ENCODE measurements at regions of chrX and their contacts with region 1.

Region 1: DNA sequence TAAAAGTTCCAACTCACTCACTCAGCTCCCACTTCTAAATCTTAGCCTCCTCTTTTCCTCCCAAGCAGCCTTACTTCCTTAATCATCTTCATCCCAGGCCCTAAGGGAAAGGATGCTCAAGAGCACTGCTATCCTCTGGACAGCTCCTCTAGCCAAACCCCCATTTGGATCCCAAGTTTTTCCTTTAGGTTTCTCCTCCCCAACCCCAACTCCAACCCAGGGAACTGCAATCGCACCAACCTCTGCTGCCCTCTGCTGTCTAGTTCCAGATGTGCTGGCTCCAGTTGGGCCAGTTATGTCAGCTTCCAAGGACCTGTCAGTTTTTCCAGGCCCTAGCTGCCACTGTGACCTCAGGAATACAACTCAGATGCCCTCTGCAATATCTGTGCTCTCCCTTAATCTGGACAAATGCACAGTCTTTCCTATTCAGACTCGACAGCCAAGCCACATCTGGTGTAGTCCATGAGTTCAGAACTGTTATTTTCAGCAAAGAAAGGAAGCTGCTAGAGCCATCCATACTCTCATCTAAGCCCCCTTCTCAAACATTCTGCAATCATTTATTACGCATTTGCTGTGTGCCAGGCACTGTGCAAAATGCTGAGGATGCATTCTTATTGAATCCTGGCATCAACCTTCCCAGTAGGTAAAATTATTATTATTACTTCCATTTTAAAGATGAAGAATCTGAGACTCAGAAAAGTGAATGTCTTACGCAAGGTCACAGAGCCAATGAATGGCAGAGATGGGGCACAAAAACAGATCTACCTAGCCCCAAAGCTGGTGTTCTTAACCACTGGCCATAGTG is 12.3 kb upstream of the XPNPEP2 start:
- DNase-seq: peak; percentile 59
- ATAC-seq: peak; percentile 53
- H3K4me3 Mint-ChIP-seq: no peak overlapping the region
- H3K27ac Mint-ChIP-seq: peak overlapping the region; percentile 62
- H3K4me1 Mint-ChIP-seq: peaks cover 33% of the 10 kb centered on the region
- H3K27me3 Mint-ChIP-seq: no peaks in the 10 kb centered on the region

Region 2: DNA sequence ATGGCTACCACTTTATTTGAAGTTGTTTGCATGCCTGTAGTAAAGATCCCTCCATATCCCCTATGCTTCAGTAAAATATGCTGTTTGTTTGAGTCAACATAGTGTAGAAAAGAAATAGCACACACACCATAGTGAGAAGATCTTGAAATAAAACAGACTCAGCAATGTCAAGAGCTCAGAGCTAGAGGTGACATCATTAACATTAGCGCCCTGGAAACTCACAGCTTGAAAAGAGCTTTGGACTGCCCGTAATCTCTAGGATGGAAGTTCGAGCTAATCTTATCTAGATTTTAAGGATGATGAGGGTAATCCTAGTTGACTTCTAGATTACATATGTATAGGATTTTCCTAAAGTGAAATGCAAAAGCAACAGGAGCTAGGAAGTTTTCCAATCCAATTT is 478.9 kb before region 1 on chrX:
- CTCF ChIA-PET with region 1: no interaction called
- POLR2A ChIA-PET with region 1: no interaction called
- intact Hi-C with region 1: no loop called
- DNase-seq: no peak
- ATAC-seq: no peak
- H3K4me3 Mint-ChIP-seq: no peak overlapping the region
- H3K27ac Mint-ChIP-seq: no peak overlapping the region
- H3K4me1 Mint-ChIP-seq: no peaks in the 10 kb centered on the region
- H3K27me3 Mint-ChIP-seq: no peaks in the 10 kb centered on the region

Region 3: DNA sequence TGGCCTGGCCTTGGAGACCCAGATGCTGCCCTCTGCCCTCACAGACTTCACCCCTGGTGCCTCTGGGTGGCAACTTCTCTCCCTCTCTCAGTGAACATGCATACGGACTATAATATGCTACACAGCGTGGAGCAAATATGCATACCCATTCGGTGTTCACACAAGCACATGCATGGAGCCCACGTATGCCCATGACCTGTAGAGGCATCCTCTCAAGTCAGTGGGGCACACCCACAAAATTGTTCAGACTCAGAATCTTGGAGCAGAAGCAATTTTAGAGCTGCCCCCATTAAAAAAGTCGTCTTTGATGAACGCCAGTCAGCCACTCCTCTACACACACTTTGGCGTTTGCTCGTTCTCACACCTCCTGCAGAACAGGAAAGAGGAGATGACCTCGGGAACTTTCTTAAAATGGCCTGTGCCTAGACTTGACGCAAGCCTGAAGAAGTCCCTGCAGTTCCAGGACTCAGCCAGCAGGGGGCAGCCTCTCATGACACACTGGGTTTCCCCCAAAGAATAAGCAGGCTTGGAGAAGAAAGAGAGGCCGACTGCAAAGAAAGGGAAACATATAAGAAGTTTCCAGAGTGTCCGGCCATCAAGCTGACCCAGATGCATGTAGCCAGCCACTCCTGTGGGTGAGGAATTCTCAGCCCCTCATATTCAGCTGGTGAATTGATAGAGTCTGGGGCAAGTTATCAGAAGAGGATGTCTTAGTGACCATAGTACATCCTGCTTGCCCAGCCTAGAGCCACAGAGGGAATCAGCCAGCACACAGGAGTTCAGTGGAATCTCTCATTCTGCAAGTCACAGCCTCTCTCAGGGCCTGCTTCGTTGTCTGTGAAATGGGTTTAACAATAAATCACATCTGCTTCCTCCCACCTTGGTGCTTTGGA is 89.0 kb before region 1 on chrX:
- CTCF ChIA-PET with region 1: interaction called, 13 read pairs
- POLR2A ChIA-PET with region 1: no interaction called
- intact Hi-C with region 1: loop called (anchors 1 kb)
- DNase-seq: peak; percentile 85
- ATAC-seq: peak; percentile 76
- H3K4me3 Mint-ChIP-seq: no peak overlapping the region
- H3K27ac Mint-ChIP-seq: no peak overlapping the region
- H3K4me1 Mint-ChIP-seq: no peaks in the 10 kb centered on the region
- H3K27me3 Mint-ChIP-seq: no peaks in the 10 kb centered on the region

Region 4: GRCh38 chrX:129654419-129655165 is 71.9 kb before region 1 on chrX and contains the start of gene APLN:
- CTCF ChIA-PET with region 1: interaction called, 12 read pairs
- POLR2A ChIA-PET with region 1: no interaction called
- intact Hi-C with region 1: loop called in 1 of 2 experiments (anchors 5 kb)
- DNase-seq: peak; percentile 38
- ATAC-seq: peak; percentile 70
- H3K4me3 Mint-ChIP-seq: peak within 1 kb of the TSS; percentile 63
- H3K27ac Mint-ChIP-seq: no peak within 1 kb of the TSS
- H3K4me1 Mint-ChIP-seq: peaks cover 9% of the 10 kb centered on the region
- H3K27me3 Mint-ChIP-seq: peaks cover 10% of the 10 kb centered on the region
- total RNA-seq, gene APLN: 1.9 to 2.1 TPM

Region 5: DNA sequence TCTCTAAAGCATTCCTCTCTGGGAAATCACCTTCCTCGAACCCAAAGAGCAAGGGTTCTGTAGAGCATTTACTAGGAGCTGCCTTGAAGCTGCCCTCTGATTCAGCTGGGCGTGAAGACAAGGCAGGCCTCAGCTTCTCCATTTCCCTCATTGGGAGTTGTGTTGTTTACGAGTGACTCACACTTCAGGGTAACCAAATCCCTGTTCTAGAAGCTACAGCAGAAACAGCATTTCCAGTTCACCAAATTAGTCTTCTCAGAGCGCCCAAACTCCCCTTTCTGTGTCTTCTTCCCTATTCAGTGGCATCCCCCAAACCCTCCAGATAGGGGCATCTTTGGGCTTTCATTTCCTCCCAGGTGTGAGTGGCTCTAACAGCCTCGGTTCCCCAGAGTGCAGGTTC is 11.4 kb after region 1 on chrX:
- CTCF ChIA-PET with region 1: interaction called, 11 read pairs
- POLR2A ChIA-PET with region 1: no interaction called
- intact Hi-C with region 1: no loop called
- DNase-seq: peak; percentile 12
- ATAC-seq: peak; percentile 48
- H3K4me3 Mint-ChIP-seq: no peak overlapping the region
- H3K27ac Mint-ChIP-seq: peak overlapping the region; percentile 8
- H3K4me1 Mint-ChIP-seq: peaks cover 24% of the 10 kb centered on the region
- H3K27me3 Mint-ChIP-seq: no peaks in the 10 kb centered on the region